Ovary (tissue), 10 donors: ENCODE measurements at regions of chr5 and their contacts with region 1.

Region 1: DNA sequence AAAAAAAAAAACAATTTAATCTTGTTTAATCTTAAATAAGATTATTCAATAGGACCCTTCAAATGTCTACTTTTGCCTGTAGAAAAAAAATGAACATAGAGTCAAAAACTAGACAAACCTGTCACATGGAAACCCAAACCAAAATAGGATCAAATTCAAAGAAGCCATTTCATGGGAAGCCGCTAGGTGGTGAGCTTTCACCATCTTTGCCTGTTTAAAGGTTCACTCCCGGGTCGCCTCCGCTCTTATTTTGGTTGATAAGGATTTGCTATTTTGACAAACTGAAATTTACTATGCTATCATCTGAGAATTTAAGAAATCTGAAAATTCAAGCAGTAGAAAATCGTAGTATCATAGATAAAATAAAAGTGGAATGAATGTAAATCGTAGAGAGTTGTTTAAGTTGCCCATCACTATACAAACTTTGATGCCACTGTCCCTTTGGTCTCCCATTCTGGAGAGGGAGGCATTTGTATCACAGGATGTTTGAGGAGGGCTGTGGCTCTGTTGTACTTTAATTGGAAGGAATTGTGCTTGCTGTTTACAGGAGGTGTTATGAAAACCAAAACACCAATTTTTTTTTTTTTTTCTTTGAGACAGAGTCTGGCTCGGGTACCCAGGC is 43.5 kb upstream of the DNAH5 start:
- DNase-seq: peak in 4 of 5 donors; percentile 12 to 37 (median 29)
- H3K4me3 ChIP-seq: no peak overlapping the region
- H3K27ac ChIP-seq: no peak overlapping the region
- H3K4me1 ChIP-seq: no peaks in the 10 kb centered on the region
- H3K27me3 ChIP-seq: no peaks in the 10 kb centered on the region
- CTCF ChIP-seq: peak; percentile 36 to 66 (median 56)
- EP300 ChIP-seq: no peak
- POLR2A ChIP-seq: no peak

Region 2: DNA sequence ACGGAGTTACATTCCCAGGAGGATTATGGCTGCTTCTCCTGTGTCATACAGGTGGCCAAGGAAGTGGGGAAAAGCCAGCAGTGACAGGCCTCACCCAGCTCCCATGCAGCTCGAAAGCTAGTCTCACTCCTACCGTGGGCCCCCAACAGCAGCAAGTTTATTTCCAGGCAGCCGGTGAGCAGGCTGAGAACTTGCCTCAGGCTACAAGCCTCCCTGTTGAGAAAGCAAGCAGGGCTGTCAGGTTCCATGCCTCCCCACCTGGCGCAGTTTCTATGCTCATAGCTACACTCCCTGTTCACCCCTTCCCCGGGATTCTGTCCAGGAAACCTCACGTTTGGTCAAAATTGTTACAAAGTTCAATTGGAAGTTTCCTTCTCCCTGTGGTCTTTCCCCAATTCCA is 15.9 kb before region 1 on chr5:
- intact Hi-C with region 1: no loop called
- DNase-seq: no peak
- H3K4me3 ChIP-seq: no peak overlapping the region
- H3K27ac ChIP-seq: no peak overlapping the region
- H3K4me1 ChIP-seq: no peaks in the 10 kb centered on the region
- H3K27me3 ChIP-seq: no peaks in the 10 kb centered on the region
- CTCF ChIP-seq: no peak
- EP300 ChIP-seq: no peak
- POLR2A ChIP-seq: no peak

Region 3: GRCh38 chr5:14270209-14270702 is 282.3 kb after region 1 on chr5:
- intact Hi-C with region 1: loop called in 2 of 4 experiments (anchors 10 kb)
- DNase-seq: peak; percentile 38 to 60 (median 53)
- H3K4me3 ChIP-seq: no peak overlapping the region
- H3K27ac ChIP-seq: peak overlapping the region; percentile 26 to 29
- H3K4me1 ChIP-seq: peaks cover 22% of the 10 kb centered on the region
- H3K27me3 ChIP-seq: no peaks in the 10 kb centered on the region
- CTCF ChIP-seq: peak; percentile 71 to 79 (median 77)
- EP300 ChIP-seq: no peak
- POLR2A ChIP-seq: no peak

Region 4: GRCh38 chr5:14351845-14352712 is 364.1 kb after region 1 on chr5:
- intact Hi-C with region 1: loop called in 1 of 4 experiments (anchors 5 kb)
- DNase-seq: peak; percentile 34 to 78 (median 66)
- H3K4me3 ChIP-seq: no peak overlapping the region
- H3K27ac ChIP-seq: no peak overlapping the region
- H3K4me1 ChIP-seq: no peaks in the 10 kb centered on the region
- H3K27me3 ChIP-seq: no peaks in the 10 kb centered on the region
- CTCF ChIP-seq: peak; percentile 66 to 84 (median 74)
- EP300 ChIP-seq: no peak
- POLR2A ChIP-seq: no peak

Region 5: GRCh38 chr5:14996997-14997396 is 1009.0 kb after region 1 on chr5:
- intact Hi-C with region 1: loop called in 1 of 4 experiments (anchors 10 kb)
- DNase-seq: no peak
- H3K4me3 ChIP-seq: no peak overlapping the region
- H3K27ac ChIP-seq: no peak overlapping the region
- H3K4me1 ChIP-seq: no peaks in the 10 kb centered on the region
- H3K27me3 ChIP-seq: no peaks in the 10 kb centered on the region
- CTCF ChIP-seq: no peak
- EP300 ChIP-seq: no peak
- POLR2A ChIP-seq: no peak